MCF 10A (cell line): ENCODE measurements at regions of chr13 and their contacts with region 1.

Region 1: DNA sequence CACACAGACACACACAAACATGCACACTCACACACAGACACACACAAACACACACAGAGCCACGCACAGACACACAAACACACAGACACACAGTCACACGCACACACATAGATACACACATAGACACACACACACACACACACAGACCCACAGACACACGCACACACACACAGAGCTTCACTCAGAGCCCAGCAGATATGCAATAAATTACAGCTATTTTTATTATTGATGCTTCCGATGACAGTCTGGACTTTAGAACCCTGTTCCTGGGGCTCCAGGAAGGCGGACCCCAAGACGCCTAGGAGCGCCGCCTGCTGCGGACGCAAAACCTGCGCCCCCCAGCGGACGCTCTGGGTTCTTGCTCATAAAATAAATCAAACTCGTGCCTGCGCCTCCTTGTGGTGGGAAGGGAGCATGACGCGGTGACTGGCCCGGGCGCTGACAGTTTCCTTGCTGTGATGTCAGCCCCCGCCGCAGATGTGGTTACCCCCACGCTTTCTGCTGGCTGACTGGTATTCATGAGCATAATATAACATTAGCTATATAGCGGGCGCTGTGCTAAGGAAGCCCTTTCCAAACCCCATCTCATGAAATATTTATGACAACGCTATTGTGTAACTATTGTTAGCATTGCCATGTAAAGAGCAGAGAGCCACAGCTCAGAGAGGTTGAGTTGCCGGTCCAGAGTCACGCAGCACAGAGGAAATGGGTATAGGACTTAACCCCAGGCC is 64.4 kb upstream of the TM9SF2 start:
- DNase-seq: peak; percentile 81
- H3K4me3 Mint-ChIP-seq: peak overlapping the region; percentile 70
- H3K27ac Mint-ChIP-seq: no peak overlapping the region
- H3K4me1 Mint-ChIP-seq: peaks cover 18% of the 10 kb centered on the region
- H3K27me3 Mint-ChIP-seq: peaks cover 19% of the 10 kb centered on the region
- CTCF ChIP-seq: peak; percentile 100

Region 2: GRCh38 chr13:99176309-99177276 is 260.3 kb before region 1 on chr13:
- CTCF ChIA-PET with region 1: interaction called, 66 read pairs
- POLR2A ChIA-PET with region 1: interaction called, 6 read pairs
- intact Hi-C with region 1: loop called (anchors 2 kb)
- DNase-seq: peak; percentile 77
- H3K4me3 Mint-ChIP-seq: no peak overlapping the region
- H3K27ac Mint-ChIP-seq: no peak overlapping the region
- H3K4me1 Mint-ChIP-seq: peaks cover 6% of the 10 kb centered on the region
- H3K27me3 Mint-ChIP-seq: no peaks in the 10 kb centered on the region
- CTCF ChIP-seq: peak; percentile 91

Region 3: GRCh38 chr13:99269627-99270241 is 167.1 kb before region 1 on chr13:
- CTCF ChIA-PET with region 1: interaction called, 167 read pairs
- POLR2A ChIA-PET with region 1: interaction called, 10 read pairs
- intact Hi-C with region 1: loop called (anchors 1 kb)
- DNase-seq: peak; percentile 54
- H3K4me3 Mint-ChIP-seq: no peak overlapping the region
- H3K27ac Mint-ChIP-seq: no peak overlapping the region
- H3K4me1 Mint-ChIP-seq: no peaks in the 10 kb centered on the region
- H3K27me3 Mint-ChIP-seq: no peaks in the 10 kb centered on the region
- CTCF ChIP-seq: peak; percentile 43

Region 4: DNA sequence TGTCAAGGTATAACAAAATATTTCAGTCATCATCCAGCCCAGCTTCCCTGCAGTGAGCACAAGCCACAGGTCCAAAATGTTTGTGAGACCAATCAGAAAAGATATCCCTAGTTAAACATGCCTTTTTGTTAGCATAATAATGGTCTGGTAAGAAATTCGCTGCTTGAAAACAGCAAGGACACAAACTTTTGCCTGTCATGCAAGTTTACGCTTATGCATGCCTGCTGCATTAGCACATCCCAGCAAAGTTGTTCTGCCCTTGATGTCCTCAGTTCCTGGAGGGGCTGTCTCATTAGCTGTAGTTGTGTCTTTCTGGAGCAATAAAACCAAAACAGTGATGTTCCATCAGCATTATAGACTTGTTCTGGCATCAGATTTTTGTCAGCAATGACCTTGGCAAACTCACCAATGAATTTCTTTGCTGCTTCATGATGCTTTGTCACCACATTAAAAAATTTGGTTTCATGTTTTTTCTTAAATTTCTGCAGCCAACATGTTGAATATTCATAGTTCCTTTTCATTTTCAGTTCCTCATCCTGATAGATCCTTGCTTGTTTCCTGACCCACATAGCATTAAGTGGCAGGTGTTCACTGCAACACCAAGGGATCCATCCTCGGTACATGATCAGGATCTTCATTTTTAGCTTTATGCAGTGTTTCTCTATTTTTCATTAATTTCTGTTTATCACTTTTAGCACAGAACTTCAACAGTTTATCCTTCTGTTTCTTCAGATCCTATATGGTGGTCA is 57.7 kb before region 1 on chr13:
- CTCF ChIA-PET with region 1: interaction called, 10 read pairs
- POLR2A ChIA-PET with region 1: no interaction called
- intact Hi-C with region 1: no loop called
- DNase-seq: no peak
- H3K4me3 Mint-ChIP-seq: no peak overlapping the region
- H3K27ac Mint-ChIP-seq: no peak overlapping the region
- H3K4me1 Mint-ChIP-seq: peaks cover 18% of the 10 kb centered on the region
- H3K27me3 Mint-ChIP-seq: no peaks in the 10 kb centered on the region
- CTCF ChIP-seq: no peak

Region 5: GRCh38 chr13:99417201-99418102 is 19.4 kb before region 1 on chr13:
- CTCF ChIA-PET with region 1: interaction called, 32 read pairs
- POLR2A ChIA-PET with region 1: interaction called, 3 read pairs
- intact Hi-C with region 1: no loop called
- DNase-seq: no peak
- H3K4me3 Mint-ChIP-seq: no peak overlapping the region
- H3K27ac Mint-ChIP-seq: no peak overlapping the region
- H3K4me1 Mint-ChIP-seq: no peaks in the 10 kb centered on the region
- H3K27me3 Mint-ChIP-seq: peaks cover 29% of the 10 kb centered on the region
- CTCF ChIP-seq: no peak

Region 6: DNA sequence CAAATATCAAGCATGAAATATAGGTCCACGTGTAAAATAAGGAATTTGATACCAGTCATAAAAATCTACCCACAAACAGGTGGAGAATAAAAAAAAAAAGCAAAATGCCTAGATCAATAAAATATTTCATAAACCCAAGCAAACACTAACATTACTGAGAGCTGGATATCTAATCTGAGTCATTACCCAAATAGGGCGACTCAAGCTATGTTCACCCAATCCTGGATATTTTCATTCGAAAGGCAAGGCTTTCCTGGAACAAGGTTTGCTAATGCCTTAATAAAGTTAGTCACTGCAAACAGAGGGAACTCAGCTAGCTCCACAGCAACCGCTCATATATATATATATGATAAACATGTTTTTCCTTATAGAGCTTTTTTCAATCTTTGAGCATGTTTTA is 30.9 kb after region 1 on chr13:
- CTCF ChIA-PET with region 1: interaction called, 19 read pairs
- POLR2A ChIA-PET with region 1: interaction called, 3 read pairs
- intact Hi-C with region 1: no loop called
- DNase-seq: peak; percentile 41
- H3K4me3 Mint-ChIP-seq: no peak overlapping the region
- H3K27ac Mint-ChIP-seq: no peak overlapping the region
- H3K4me1 Mint-ChIP-seq: peaks cover 17% of the 10 kb centered on the region
- H3K27me3 Mint-ChIP-seq: peaks cover 15% of the 10 kb centered on the region
- CTCF ChIP-seq: no peak

Region 7: GRCh38 chr13:99516153-99516929 is 79.5 kb after region 1 on chr13:
- CTCF ChIA-PET with region 1: interaction called, 10 read pairs
- POLR2A ChIA-PET with region 1: no interaction called
- intact Hi-C with region 1: no loop called
- DNase-seq: no peak
- H3K4me3 Mint-ChIP-seq: no peak overlapping the region
- H3K27ac Mint-ChIP-seq: peak overlapping the region; percentile 40
- H3K4me1 Mint-ChIP-seq: peaks cover 20% of the 10 kb centered on the region
- H3K27me3 Mint-ChIP-seq: no peaks in the 10 kb centered on the region
- CTCF ChIP-seq: no peak